MCF 10A (cell line): ENCODE measurements at regions of chrX and their contacts with region 1.

Region 1: GRCh38 chrX:15349046-15349445 is 13.7 kb upstream of the PIGA start:
- DNase-seq: peak; percentile 75
- H3K4me3 Mint-ChIP-seq: no peak overlapping the region
- H3K27ac Mint-ChIP-seq: no peak overlapping the region
- H3K4me1 Mint-ChIP-seq: no peaks in the 10 kb centered on the region
- H3K27me3 Mint-ChIP-seq: peaks cover 53% of the 10 kb centered on the region
- CTCF ChIP-seq: peak; percentile 56

Region 2: DNA sequence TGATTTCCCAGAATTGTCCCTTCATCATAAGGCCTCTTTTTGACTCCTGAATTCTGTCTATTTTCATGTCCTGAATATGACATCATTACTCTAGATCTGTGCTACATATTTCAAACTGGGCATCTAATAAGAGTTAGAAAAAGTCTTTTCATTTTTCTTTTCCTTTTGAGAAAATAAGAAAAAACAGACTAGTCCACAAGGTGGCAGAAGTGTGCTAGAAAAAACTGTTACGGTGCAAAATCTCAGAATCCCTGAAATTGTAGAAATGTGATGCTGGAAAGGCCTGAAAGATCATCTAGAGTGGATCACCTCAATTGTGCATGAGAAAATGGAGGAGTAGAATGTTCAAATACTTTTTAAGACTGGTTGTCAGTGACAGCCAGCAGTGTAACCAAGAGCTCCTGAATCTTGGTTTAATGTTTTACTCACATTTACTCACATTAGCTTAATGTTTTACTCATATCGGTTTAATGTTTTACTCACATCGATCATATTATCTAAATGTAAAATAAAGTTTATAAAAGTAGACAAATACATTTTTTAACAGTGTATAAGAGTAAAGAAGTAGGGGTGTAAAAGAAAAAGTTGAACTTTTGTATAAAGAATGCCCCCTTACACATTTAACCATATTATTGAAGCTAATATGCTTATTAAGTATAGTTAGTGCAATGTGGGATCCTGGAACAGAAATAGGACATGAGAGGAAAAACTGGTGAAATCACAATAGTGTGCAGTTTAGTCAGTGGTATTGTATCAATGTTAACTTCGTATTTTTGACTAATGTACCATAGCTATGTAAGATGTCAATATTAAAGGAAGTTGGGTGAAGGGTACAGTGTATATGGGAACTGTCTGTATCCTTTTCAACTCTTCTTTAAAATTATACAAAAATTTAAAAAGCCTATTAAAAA is 48.9 kb before region 1 on chrX:
- CTCF ChIA-PET with region 1: interaction called, 87 read pairs
- POLR2A ChIA-PET with region 1: interaction called, 3 read pairs
- intact Hi-C with region 1: no loop called
- DNase-seq: peak; percentile 33
- H3K4me3 Mint-ChIP-seq: no peak overlapping the region
- H3K27ac Mint-ChIP-seq: no peak overlapping the region
- H3K4me1 Mint-ChIP-seq: no peaks in the 10 kb centered on the region
- H3K27me3 Mint-ChIP-seq: peaks cover 20% of the 10 kb centered on the region
- CTCF ChIP-seq: peak; percentile 38

Region 3: GRCh38 chrX:15366506-15367352 is 17.7 kb after region 1 on chrX:
- CTCF ChIA-PET with region 1: interaction called, 18 read pairs
- POLR2A ChIA-PET with region 1: no interaction called
- intact Hi-C with region 1: no loop called
- DNase-seq: no peak
- H3K4me3 Mint-ChIP-seq: no peak overlapping the region
- H3K27ac Mint-ChIP-seq: no peak overlapping the region
- H3K4me1 Mint-ChIP-seq: no peaks in the 10 kb centered on the region
- H3K27me3 Mint-ChIP-seq: peaks cover 82% of the 10 kb centered on the region
- CTCF ChIP-seq: no peak

Region 4: DNA sequence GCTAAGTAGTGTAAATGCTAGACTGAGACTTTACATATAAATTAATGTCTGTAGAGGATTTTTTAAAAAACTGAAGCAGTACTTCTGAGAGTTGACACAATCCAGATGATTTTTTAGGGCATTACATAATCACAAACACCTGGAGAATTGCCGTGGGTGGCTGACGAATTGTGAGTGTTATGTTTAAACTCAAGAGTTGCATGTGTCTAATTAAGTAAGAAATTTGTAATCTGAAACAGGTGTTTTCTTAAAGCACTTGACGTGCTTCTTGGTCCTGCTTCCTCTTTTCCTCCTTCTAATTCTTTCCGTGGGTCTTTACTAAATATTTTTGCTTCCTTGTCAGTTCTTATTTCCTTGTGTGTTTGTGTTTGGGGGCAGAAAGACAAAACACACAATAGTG is 116.3 kb after region 1 on chrX:
- CTCF ChIA-PET with region 1: interaction called, 353 read pairs
- POLR2A ChIA-PET with region 1: interaction called, 8 read pairs
- intact Hi-C with region 1: loop called (anchors 1 kb)
- DNase-seq: peak; percentile 50
- H3K4me3 Mint-ChIP-seq: no peak overlapping the region
- H3K27ac Mint-ChIP-seq: no peak overlapping the region
- H3K4me1 Mint-ChIP-seq: peaks cover 6% of the 10 kb centered on the region
- H3K27me3 Mint-ChIP-seq: peaks cover 11% of the 10 kb centered on the region
- CTCF ChIP-seq: no peak

Region 5: GRCh38 chrX:15564981-15565579 is 216.0 kb after region 1 on chrX:
- CTCF ChIA-PET with region 1: interaction called, 12 read pairs
- POLR2A ChIA-PET with region 1: no interaction called
- intact Hi-C with region 1: loop called (anchors 1 kb)
- DNase-seq: peak; percentile 83
- H3K4me3 Mint-ChIP-seq: no peak overlapping the region
- H3K27ac Mint-ChIP-seq: no peak overlapping the region
- H3K4me1 Mint-ChIP-seq: no peaks in the 10 kb centered on the region
- H3K27me3 Mint-ChIP-seq: peaks cover 69% of the 10 kb centered on the region
- CTCF ChIP-seq: peak; percentile 84